Pancreas (tissue), 10 donors: ENCODE measurements at regions of chr16 and their contacts with region 1.

Region 1: GRCh38 chr16:75644240-75645012 is 3.0 kb downstream of the KARS1 start:
- DNase-seq: no peak
- ATAC-seq: no peak
- H3K4me3 ChIP-seq: no peak overlapping the region
- H3K27ac ChIP-seq: no peak overlapping the region
- H3K4me1 ChIP-seq: peaks cover 11 to 16% (median 12%) of the 10 kb centered on the region in 3 donors
- H3K27me3 ChIP-seq: no peaks in the 10 kb centered on the region
- CTCF ChIP-seq: no peak

Region 2: GRCh38 chr16:75687361-75687760 is 42.9 kb after region 1 on chr16:
- intact Hi-C with region 1: no loop called
- DNase-seq: no peak
- ATAC-seq: no peak
- H3K4me3 ChIP-seq: no peak overlapping the region
- H3K27ac ChIP-seq: no peak overlapping the region
- H3K4me1 ChIP-seq: no peaks in the 10 kb centered on the region
- H3K27me3 ChIP-seq: no peaks in the 10 kb centered on the region
- CTCF ChIP-seq: no peak

Region 3: GRCh38 chr16:75764154-75764768 is 119.8 kb after region 1 on chr16:
- intact Hi-C with region 1: loop called in 1 of 3 experiments (anchors 5 kb)
- DNase-seq: peak in 3 of 6 donors; percentile 34 to 74 (median 53)
- ATAC-seq: peak; percentile 94 to 100 (median 100)
- H3K4me3 ChIP-seq: no peak overlapping the region
- H3K27ac ChIP-seq: no peak overlapping the region
- H3K4me1 ChIP-seq: no peaks in the 10 kb centered on the region
- H3K27me3 ChIP-seq: no peaks in the 10 kb centered on the region
- CTCF ChIP-seq: peak; percentile 44 to 65 (median 58)